Activated naive CD4-positive, alpha-beta T cell treated with anti-CD3 and anti-CD28 coated beads, Interleukin-2, amount 10 ng/mL, durations not matched to agents 7 days and 5 days (primary cell): ENCODE measurements at regions of chr5 and their contacts with region 1.

Region 1: DNA sequence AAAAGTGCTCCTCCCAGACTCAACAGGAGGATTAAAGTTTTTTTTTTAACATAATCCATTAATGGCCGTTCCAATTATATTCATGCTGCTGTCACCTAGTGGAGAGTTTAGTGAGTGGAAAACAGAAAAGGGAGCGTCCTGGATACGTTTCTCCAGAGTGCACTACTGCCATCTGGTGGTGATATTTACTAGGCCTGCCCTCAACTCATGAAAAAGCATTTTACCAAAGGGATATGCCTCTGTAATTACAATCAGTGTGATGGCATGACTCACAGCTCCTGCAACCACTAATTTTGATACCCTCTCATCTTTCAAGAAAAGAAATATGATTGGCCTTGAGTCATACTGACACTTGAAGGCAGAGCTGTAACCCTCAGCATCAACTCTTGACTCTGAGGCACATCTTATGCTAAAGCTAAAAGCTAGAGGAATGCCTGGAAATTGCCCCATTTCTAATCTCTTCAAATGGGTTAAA is 20.0 kb downstream of the MINAR2 start:
- DNase-seq: peak; percentile 66
- H3K4me3 Mint-ChIP-seq: no peak overlapping the region
- H3K27ac Mint-ChIP-seq: no peak overlapping the region
- H3K4me1 Mint-ChIP-seq: no peaks in the 10 kb centered on the region
- H3K27me3 Mint-ChIP-seq: no peaks in the 10 kb centered on the region

Region 2: DNA sequence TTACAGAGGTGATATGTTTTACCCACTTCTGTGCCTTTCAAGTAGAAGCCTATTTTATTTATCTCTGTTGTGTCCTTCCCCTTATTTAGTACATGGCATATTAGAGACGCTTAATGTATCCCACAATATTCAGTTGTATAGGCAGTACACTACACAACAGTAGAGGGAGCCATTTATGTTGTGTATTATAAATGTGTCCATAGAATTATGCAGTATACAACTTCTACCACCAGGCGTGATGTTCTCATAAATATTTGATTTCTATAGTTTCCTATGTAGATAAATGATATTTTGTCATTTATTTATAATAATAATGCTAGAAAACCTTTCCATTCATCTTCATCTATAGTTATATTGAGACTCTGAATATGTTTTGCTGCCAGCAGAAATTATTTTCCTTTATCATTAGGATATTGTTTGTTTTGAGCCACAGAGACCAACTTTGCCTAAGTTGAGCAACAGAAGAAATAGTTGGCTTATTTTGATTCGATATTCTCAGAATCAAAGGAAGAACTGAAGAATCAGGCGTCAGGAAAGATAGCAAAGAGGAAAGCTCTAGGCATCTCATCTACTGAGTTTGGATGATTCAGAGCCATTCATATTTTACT is 226.2 kb before region 1 on chr5:
- CTCF ChIA-PET with region 1: no interaction called
- DNase-seq: no peak
- H3K4me3 Mint-ChIP-seq: no peak overlapping the region
- H3K27ac Mint-ChIP-seq: no peak overlapping the region
- H3K4me1 Mint-ChIP-seq: no peaks in the 10 kb centered on the region
- H3K27me3 Mint-ChIP-seq: no peaks in the 10 kb centered on the region

Region 3: DNA sequence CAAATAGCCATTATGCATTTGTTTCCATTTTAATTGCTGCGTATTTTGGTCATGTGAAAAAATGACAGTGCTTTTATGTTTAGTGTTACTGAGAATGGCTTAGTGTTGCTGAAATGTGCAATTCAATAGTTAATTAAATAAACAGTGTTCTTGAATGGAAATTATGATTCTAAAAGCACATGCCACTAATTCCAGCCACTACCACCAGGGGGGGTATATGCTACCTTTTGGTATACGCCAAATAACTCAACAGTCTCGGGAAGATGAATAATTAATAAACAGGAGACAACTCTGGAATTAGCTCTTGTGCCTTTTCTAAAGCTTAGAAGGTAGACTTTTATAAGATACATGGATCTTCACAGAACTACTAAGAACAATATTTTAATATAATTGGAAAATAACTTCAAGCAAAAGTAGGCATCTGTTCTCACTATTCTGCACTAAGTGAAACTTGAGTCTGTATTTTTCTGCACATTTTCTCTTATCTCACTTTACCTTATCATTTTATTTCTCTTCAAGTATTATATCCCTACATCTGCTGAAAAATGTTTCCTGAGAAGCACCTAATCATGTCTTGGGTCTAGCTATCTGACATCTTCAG is 103.5 kb before region 1 on chr5:
- CTCF ChIA-PET with region 1: interaction called, 10 read pairs
- DNase-seq: peak; percentile 53
- H3K4me3 Mint-ChIP-seq: no peak overlapping the region
- H3K27ac Mint-ChIP-seq: no peak overlapping the region
- H3K4me1 Mint-ChIP-seq: no peaks in the 10 kb centered on the region
- H3K27me3 Mint-ChIP-seq: no peaks in the 10 kb centered on the region

Region 4: DNA sequence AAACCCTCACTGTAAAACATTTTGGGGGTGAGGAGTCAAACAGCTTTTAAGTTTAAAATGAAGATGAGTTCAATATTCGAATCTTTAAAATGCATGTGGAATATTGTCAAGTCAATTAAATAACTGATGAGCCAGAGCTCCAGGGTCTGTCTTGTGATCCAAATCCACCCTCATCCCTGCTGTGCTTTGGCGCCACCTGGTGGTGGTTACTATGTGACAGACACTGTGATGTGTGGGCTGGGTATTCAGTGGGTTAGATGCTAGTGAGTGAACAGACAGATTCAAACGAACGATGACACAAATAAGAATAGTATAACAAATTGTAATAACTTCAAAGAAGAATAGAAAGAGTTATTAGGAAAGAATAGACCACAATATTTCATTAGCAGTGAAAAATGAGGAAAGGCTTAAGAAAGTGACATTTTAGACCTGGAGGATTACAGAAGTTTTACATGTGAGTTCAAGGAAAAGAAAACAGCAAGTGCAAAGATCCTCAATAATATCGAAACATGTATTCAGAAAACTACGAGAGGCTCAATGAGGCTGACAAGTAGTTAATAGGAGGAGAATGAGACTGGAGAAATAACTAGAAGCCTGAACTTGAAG is 84.9 kb after region 1 on chr5:
- CTCF ChIA-PET with region 1: interaction called, 87 read pairs
- DNase-seq: peak; percentile 77
- H3K4me3 Mint-ChIP-seq: no peak overlapping the region
- H3K27ac Mint-ChIP-seq: no peak overlapping the region
- H3K4me1 Mint-ChIP-seq: no peaks in the 10 kb centered on the region
- H3K27me3 Mint-ChIP-seq: peaks cover 8% of the 10 kb centered on the region